BJ (cell line): ENCODE measurements at regions of chr17 and their contacts with region 1.

Region 1: GRCh38 chr17:49180303-49180702 is 30.1 kb downstream of the GNGT2 start:
- DNase-seq: no peak
- H3K4me3 ChIP-seq: no peak overlapping the region
- H3K27me3 ChIP-seq: peaks cover 4% of the 10 kb centered on the region; the same call in 1 of the 2 replicates
- CTCF ChIP-seq: peak; percentile 87

Region 2: DNA sequence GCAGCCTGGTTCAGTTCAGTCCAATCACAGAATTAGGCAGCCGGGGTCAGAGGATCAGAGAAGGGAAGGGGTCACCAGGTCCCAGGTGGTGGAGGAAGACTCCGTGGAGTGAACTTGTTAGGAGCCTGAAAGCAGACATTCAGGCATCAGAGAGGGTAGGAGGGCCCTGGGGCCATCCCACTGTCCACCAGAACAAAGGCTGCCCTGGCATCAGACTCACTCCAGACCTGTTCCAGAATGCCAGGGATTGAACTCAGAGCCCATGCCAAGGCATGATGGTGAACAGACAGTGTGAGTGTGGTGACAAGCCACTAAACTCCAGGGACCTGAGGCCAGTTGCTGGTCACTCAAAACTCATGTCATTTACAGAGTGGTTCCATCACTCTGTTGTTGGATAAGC is 10.1 kb before region 1 on chr17:
- CTCF ChIA-PET with region 1: interaction called, 18 read pairs
- POLR2A ChIA-PET with region 1: no interaction called
- DNase-seq: no peak
- H3K4me3 ChIP-seq: no peak overlapping the region
- H3K27me3 ChIP-seq: peaks cover 11% of the 10 kb centered on the region
- CTCF ChIP-seq: no peak

Region 3: GRCh38 chr17:49191917-49192741 is 11.8 kb after region 1 on chr17:
- CTCF ChIA-PET with region 1: interaction called, 11 read pairs
- POLR2A ChIA-PET with region 1: no interaction called
- DNase-seq: peak; percentile 41
- H3K4me3 ChIP-seq: peak overlapping the region; percentile 65
- H3K27me3 ChIP-seq: no peaks in the 10 kb centered on the region
- CTCF ChIP-seq: peak; percentile 45

Region 4: DNA sequence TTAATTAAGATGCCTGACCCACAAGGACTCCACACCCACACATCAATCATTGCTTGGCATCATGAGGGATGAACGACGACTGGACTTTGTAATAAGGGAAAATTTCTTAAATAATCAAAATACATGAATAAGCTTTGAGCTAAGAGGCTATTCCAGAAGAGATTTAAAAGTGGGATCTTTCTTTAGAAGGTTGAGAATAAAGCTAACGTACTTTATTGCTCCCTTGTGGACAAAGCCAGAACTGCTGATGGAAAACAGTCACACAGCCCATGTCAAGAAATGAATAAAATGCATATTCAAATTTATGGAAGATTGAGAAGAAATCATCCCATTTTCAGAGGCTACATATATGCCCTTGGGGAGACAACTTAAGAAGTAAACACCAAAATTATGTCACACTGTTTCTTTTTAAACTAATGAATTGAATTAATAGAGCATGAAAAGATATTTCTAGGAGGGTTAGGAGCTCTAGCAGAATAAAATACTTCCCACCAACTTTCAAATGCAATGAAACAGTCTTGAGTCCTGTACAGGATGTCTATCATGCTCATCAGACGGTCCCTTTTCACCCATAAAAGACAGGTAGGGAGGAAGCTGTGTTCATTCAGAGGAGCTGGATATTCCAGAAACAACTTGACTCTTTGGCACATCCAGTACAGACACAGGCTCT is 110.5 kb after region 1 on chr17:
- CTCF ChIA-PET with region 1: interaction called, 15 read pairs
- POLR2A ChIA-PET with region 1: no interaction called
- DNase-seq: no peak
- H3K4me3 ChIP-seq: no peak overlapping the region
- H3K27me3 ChIP-seq: no peaks in the 10 kb centered on the region
- CTCF ChIP-seq: peak; percentile 75